Transverse colon (tissue), 4 donors: ENCODE measurements at regions of chr1 and their contacts with region 1.

Region 1: DNA sequence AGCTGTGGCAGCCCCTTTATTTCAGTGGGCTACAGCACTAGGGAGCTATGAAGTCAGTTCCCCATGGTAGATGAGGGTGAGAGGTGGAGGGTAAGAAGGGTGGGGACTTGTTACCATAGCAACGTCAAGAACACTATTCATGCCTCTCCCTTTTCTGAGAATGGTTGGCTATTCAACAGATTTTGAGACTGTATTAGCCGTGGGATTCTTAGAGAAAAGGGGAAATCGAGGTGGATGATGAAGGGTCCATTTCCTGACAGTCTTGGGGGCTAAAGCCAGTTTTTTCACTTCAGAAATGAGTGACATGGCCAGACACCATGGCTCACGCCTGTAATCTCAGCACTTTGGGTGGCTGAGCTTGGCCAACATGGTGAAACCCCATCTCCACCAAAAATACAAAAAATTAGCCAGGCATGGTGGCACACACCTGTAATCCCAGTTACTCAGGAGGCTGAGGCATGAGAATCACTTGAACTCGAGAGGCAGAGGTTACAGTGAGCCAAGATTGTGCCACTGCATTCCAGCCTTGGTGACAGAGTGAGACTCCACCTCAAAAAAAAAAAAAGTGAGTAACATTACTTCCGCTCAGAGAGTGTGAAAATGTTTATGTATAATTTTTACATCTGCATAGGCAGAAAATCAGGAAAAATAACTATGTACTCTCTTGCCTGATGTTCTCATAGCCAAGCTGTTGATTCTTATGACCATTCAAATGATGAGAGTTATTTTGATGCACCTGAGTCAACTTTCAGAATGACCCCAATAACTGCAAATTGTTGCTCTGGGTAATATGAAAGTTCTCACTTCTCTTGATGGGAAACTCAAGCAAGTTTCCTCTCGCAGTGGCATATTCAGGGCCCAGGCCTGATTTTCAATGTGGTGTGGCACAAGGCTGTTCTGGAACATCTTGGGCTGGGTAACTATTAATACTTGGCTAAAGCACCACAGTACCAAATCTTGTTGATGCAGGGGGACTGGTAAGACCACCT is 23.2 kb upstream of the RGSL1 start:
- DNase-seq: no peak
- H3K4me3 ChIP-seq: no peak overlapping the region
- H3K27ac ChIP-seq: no peak overlapping the region
- H3K4me1 ChIP-seq: no peaks in the 10 kb centered on the region
- H3K27me3 ChIP-seq: no peaks in the 10 kb centered on the region
- CTCF ChIP-seq: no peak
- EP300 ChIP-seq: no peak
- POLR2A ChIP-seq: no peak

Region 2: GRCh38 chr1:182069028-182069466 is 357.7 kb before region 1 on chr1:
- in situ Hi-C with region 1: no loop called
- intact Hi-C with region 1: loop called (anchors 10 kb)
- DNase-seq: peak; percentile 54
- H3K4me3 ChIP-seq: no peak overlapping the region
- H3K27ac ChIP-seq: no peak overlapping the region
- H3K4me1 ChIP-seq: no peaks in the 10 kb centered on the region
- H3K27me3 ChIP-seq: peaks cover 17% of the 10 kb centered on the region
- CTCF ChIP-seq: peak; percentile 27 to 78 (median 53)
- EP300 ChIP-seq: no peak
- POLR2A ChIP-seq: no peak

Region 3: GRCh38 chr1:182317611-182318161 is 109.0 kb before region 1 on chr1:
- in situ Hi-C with region 1: no loop called
- intact Hi-C with region 1: no loop called
- DNase-seq: peak; percentile 13
- H3K4me3 ChIP-seq: no peak overlapping the region
- H3K27ac ChIP-seq: peak overlapping the region; percentile 66 to 82 (median 68)
- H3K4me1 ChIP-seq: peaks cover 0 to 47% (median 33%) of the 10 kb centered on the region in 4 donors
- H3K27me3 ChIP-seq: no peaks in the 10 kb centered on the region
- CTCF ChIP-seq: no peak
- EP300 ChIP-seq: no peak
- POLR2A ChIP-seq: no peak

Region 4: DNA sequence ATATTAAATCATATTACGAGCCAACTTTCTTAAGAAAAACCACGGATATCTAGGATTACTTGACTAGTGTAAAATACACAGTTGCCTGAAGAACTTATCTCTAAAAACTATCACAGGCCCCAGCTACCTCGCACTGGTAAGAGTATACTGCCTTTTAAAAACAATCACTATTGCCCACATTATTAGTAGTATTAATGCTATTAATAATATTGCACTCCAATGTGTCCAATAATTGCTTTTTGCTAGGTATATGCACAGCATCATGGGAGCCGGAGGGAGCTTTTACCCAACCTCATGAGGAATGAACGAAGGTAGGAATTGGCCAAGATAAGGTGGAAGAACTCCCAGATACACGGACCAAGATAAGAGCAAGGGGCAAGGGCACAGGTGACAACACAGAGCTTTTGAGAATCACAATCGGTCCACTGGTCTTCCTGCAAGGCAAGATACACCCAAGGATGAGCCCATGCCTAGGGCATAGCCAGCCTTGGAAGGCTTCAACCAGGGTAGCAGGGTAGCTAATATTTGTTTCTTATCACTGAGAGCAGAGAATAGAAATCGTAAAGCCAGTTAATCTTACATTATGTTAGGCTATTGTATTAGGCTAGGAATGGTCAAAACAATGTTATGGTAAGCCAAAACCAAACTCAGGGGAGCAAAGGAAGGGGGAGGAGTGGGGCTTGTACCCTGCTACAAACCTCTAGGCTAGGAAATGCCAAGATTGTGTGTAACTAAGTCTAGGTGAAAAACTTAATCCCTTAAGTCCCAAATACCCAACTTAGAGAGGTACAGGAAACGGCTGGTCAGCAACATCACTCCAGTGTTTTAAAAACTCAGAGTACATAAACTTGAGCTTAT is 44.5 kb before region 1 on chr1:
- in situ Hi-C with region 1: no loop called
- intact Hi-C with region 1: no loop called
- DNase-seq: no peak
- H3K4me3 ChIP-seq: no peak overlapping the region
- H3K27ac ChIP-seq: no peak overlapping the region
- H3K4me1 ChIP-seq: peaks cover 0 to 22% (median 4%) of the 10 kb centered on the region in 4 donors
- H3K27me3 ChIP-seq: no peaks in the 10 kb centered on the region
- CTCF ChIP-seq: no peak
- EP300 ChIP-seq: no peak
- POLR2A ChIP-seq: no peak

Region 5: DNA sequence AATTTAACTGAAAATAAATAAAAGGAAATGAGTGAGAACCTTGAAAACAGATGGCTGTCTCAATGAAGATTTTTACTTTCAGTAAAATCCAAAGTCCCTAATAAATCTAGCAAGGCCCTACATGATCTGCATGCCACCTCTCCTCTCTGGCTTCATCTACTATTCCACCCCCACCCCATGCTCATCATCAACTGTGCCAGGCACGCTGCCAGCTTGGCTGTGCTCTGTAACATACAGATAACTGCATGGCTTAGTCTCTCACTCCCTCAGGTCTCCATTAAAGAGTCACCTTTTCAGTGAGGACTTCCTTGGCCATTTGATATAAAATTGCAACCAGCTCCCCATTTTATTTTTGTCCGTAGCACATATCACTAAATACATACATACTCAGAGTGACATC is 49.9 kb after region 1 on chr1:
- in situ Hi-C with region 1: no loop called
- intact Hi-C with region 1: loop called (anchors 5 kb)
- DNase-seq: no peak
- H3K4me3 ChIP-seq: no peak overlapping the region
- H3K27ac ChIP-seq: no peak overlapping the region
- H3K4me1 ChIP-seq: no peaks in the 10 kb centered on the region
- H3K27me3 ChIP-seq: no peaks in the 10 kb centered on the region
- CTCF ChIP-seq: no peak
- EP300 ChIP-seq: no peak
- POLR2A ChIP-seq: no peak

Region 6: GRCh38 chr1:182806015-182806678 is 379.4 kb after region 1 on chr1:
- in situ Hi-C with region 1: no loop called
- intact Hi-C with region 1: no loop called
- DNase-seq: no peak
- H3K4me3 ChIP-seq: no peak overlapping the region
- H3K27ac ChIP-seq: no peak overlapping the region
- H3K4me1 ChIP-seq: no peaks in the 10 kb centered on the region
- H3K27me3 ChIP-seq: no peaks in the 10 kb centered on the region
- CTCF ChIP-seq: no peak
- EP300 ChIP-seq: no peak
- POLR2A ChIP-seq: no peak